AG04449 (cell line): ENCODE measurements at regions of chr1 and their contacts with region 1.

Region 1: DNA sequence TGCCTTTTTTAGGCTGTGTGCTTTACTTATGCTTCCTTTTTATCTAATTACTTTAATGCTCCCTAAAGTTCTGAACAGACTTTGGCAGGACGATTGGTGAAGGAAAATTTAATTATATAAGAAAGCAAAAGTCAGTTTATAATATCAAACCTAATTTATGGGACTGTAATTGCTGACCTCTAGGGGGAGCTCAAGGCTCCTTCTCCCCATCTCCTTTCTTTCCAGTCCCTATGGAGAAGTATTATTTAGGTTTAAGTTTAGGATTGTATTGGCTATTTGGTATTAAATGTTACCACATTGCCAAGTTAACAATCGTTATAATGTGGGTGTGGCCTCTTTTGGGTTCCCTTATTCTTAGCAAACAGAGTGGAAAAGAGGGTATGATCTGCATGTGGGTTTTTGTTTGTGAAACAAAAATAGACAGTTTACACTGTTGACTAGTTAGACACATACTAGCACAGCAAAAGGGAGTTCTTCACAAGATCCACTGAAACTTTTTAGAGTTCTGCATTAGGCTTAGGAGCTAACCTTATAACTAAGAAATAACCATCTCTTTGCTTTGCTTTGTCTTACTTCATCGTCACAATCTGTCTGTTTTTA is 48.2 kb upstream of the TNFSF4 start:
- DNase-seq: no peak
- H3K4me3 ChIP-seq: no peak overlapping the region
- CTCF ChIP-seq: peak; percentile 63

Region 2: GRCh38 chr1:173095632-173096031 is 159.7 kb before region 1 on chr1:
- CTCF ChIA-PET with region 1: no interaction called
- POLR2A ChIA-PET with region 1: no interaction called
- DNase-seq: peak; percentile 61
- H3K4me3 ChIP-seq: no peak overlapping the region
- CTCF ChIP-seq: no peak

Region 3: DNA sequence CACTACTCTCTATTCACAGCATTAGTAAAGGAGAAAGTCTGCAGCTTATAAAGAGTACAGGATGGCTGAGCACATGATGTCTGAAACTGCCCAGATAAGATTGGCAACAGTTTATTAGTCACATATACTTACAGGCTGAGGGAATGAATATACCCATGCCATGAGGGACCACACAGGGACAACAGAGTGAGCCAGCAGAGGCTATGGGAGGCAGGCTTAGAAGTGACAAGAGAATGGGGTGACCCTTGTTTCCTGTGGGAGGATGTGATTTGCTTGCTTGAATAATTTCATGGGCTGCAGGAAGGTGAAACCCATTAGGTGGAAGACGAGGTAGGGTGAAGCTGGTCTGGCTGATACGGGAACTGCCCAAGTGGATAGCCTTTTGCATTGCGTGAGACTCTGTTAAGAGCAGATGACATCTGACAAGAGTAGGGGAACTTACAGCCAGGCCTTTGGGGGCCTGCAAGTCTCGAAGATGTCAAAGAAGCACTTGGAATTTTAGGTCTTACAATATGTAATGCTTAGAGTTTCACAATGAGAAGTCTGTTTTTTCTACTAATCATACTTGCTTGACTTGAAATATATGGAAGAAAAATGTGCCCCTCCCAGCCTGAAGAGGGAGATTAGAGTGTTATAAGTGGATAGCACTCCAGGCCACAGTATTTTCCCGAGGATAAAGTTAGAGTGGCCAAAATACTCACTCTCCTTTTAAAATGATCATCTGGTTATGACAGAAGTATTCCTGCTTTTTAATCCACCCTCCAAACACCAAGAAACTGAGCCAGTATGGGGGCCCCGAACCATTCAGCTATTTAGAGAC is 13.6 kb before region 1 on chr1:
- CTCF ChIA-PET with region 1: interaction called, 45 read pairs
- POLR2A ChIA-PET with region 1: no interaction called
- DNase-seq: no peak
- H3K4me3 ChIP-seq: no peak overlapping the region
- CTCF ChIP-seq: no peak

Region 4: GRCh38 chr1:173269490-173270230 is 14.3 kb after region 1 on chr1:
- CTCF ChIA-PET with region 1: interaction called, 36 read pairs
- POLR2A ChIA-PET with region 1: no interaction called
- DNase-seq: peak; percentile 78
- H3K4me3 ChIP-seq: no peak overlapping the region
- CTCF ChIP-seq: no peak

Region 5: DNA sequence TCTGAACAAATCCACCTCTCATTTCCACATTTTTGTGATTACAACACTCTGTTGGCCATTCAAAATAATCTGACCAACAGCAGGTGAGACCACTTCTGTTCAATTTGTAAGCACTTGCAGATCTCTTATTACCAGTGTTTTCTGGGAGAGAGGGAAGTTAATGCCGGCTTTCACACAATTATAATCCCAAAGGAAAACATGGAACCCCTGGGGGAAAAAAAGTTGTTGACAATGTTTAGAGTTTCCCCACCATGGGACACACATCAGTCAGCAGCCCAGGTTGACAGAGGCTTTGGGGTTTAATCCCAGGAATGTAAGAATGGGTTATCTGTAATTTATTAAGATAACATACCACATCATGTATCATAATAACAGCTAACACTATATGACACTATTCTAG is 20.2 kb after region 1 on chr1:
- CTCF ChIA-PET with region 1: interaction called, 36 read pairs
- POLR2A ChIA-PET with region 1: no interaction called
- DNase-seq: no peak
- H3K4me3 ChIP-seq: no peak overlapping the region
- CTCF ChIP-seq: no peak

Region 6: DNA sequence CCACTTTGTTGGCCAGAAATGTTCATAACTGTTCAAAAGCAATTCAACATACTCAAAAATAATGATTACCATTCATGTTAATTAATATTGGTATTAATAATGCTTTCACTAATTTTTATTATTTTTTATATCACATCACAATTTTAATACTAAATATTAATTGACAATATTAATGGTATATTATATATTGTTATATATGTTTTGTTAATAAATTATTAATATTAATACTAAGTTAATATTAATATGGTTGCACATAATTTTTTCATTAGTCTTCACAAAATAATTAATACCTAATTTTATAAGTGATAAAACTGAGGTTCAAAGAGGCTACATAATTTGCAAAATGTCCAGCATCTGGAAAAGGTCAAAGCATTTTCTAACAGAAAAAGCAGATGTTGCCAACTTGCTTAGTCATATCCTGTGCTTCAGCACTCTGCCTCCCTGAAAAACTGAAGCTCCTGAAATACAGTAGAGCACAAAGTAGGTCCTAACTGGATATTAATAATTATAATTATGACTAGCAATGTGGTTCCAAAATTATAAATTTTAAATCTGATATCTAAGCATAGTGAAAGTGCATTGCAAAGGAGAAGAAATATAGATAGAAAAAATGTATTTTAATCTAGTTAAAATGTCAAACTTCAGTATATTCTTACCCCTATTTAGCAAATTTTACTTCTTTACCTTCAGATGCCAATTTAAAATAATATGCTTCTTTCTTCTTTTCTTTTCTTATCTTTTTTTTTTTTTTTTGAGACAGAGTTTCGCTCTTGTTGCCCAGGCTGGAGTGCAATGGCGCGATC is 75.0 kb after region 1 on chr1:
- CTCF ChIA-PET with region 1: no interaction called
- POLR2A ChIA-PET with region 1: no interaction called
- DNase-seq: peak; percentile 14
- H3K4me3 ChIP-seq: no peak overlapping the region
- CTCF ChIP-seq: no peak